CD8-positive, alpha-beta memory T cell (primary cell): ENCODE measurements at regions of chr1 and their contacts with region 1.

Region 1: GRCh38 chr1:78617615-78618026 is 2.6 kb upstream of the IFI44L start:
- DNase-seq: peak; percentile 10 to 74 (median 70)
- H3K4me3 ChIP-seq: no peak overlapping the region
- H3K4me3 Mint-ChIP-seq: peak overlapping the region in 5 of 7 donors; percentile 13 to 43 (median 19)
- H3K27ac ChIP-seq: no peak overlapping the region
- H3K27ac Mint-ChIP-seq: peak overlapping the region in 5 of 8 donors; percentile 43 to 86 (median 64)
- H3K4me1 ChIP-seq: peaks cover 23% of the 10 kb centered on the region
- H3K4me1 Mint-ChIP-seq: peaks cover 40 to 45% (median 44%) of the 10 kb centered on the region in 3 donors
- H3K27me3 ChIP-seq: no peaks in the 10 kb centered on the region
- H3K27me3 Mint-ChIP-seq: no peaks in the 10 kb centered on the region

Region 2: GRCh38 chr1:78440381-78440793 is 177.2 kb before region 1 on chr1:
- CTCF ChIA-PET with region 1: no interaction called
- POLR2A ChIA-PET with region 1: no interaction called
- DNase-seq: no peak
- H3K4me3 ChIP-seq: no peak overlapping the region
- H3K4me3 Mint-ChIP-seq: no peak overlapping the region
- H3K27ac ChIP-seq: no peak overlapping the region
- H3K27ac Mint-ChIP-seq: no peak overlapping the region
- H3K4me1 ChIP-seq: no peaks in the 10 kb centered on the region
- H3K4me1 Mint-ChIP-seq: no peaks in the 10 kb centered on the region
- H3K27me3 ChIP-seq: no peaks in the 10 kb centered on the region
- H3K27me3 Mint-ChIP-seq: no peaks in the 10 kb centered on the region

Region 3: DNA sequence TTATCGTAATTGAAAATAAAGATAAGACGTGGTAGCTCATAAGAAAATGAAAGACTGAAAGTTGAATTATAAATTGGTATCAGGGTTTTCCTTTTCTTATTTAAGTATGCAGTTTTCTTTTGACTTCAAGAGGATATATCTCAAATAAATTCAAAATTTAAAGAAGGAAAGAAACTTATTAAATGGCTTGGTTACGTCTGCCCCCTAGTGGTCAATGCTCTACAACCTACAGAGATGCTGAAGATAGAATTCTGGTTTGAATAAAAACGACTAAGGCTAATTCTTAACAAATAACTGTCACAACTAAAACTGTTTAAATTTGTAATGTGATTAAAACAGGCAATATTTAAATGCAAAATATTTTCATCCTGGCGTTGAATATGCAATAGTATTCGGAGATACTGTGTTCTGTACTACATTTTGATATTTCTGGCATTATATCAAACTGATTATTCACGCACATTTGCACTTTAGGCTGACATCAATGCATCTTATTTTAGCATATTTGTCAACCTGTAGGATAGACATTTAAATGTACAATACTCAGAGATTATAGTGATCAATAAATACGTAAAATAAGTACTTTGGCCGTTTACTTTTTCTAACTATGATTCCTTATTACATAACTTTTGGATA is 58.8 kb after region 1 on chr1:
- CTCF ChIA-PET with region 1: interaction called, 37 read pairs
- POLR2A ChIA-PET with region 1: no interaction called
- DNase-seq: peak; percentile 26 to 61 (median 43)
- H3K4me3 ChIP-seq: no peak overlapping the region
- H3K4me3 Mint-ChIP-seq: no peak overlapping the region
- H3K27ac ChIP-seq: no peak overlapping the region
- H3K27ac Mint-ChIP-seq: no peak overlapping the region
- H3K4me1 ChIP-seq: no peaks in the 10 kb centered on the region
- H3K4me1 Mint-ChIP-seq: peaks cover 0 to 2% (median 0%) of the 10 kb centered on the region in 3 donors
- H3K27me3 ChIP-seq: no peaks in the 10 kb centered on the region
- H3K27me3 Mint-ChIP-seq: peaks cover 0 to 7% of the 10 kb centered on the region in 2 donors

Region 4: DNA sequence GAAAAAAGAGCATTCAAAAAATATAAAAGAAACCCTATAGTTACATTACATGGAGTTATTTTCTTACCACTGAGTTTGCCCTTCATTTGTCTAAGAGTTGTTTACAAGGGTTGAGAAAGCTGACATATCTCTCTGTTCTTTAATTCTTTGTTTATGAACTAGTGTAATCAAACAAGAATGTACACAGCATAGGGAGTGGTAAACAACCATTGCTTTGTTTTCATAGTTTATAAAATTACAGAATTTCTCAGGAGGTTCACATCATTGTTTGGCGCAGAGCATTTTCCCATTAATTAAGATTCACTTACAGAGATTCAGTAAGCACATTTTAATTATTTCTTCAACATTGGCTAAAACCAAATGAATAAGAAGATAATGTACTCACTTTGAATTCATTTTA is 119.6 kb after region 1 on chr1:
- CTCF ChIA-PET with region 1: no interaction called
- POLR2A ChIA-PET with region 1: no interaction called
- DNase-seq: no peak
- H3K4me3 ChIP-seq: no peak overlapping the region
- H3K4me3 Mint-ChIP-seq: no peak overlapping the region
- H3K27ac ChIP-seq: no peak overlapping the region
- H3K27ac Mint-ChIP-seq: no peak overlapping the region
- H3K4me1 ChIP-seq: no peaks in the 10 kb centered on the region
- H3K4me1 Mint-ChIP-seq: no peaks in the 10 kb centered on the region
- H3K27me3 ChIP-seq: no peaks in the 10 kb centered on the region
- H3K27me3 Mint-ChIP-seq: no peaks in the 10 kb centered on the region